IMR-90 (cell line): ENCODE measurements at regions of chr6 and their contacts with region 1.

Region 1: GRCh38 chr6:168088161-168089053 is 9.4 kb upstream of the FRMD1 start:
- DNase-seq: peak; percentile 74
- ATAC-seq: peak; percentile 99
- H3K4me3 ChIP-seq: no peak overlapping the region
- H3K27ac ChIP-seq: peak overlapping the region; percentile 48; the same call in 1 of the 2 replicates
- H3K4me1 ChIP-seq: peaks cover 15% of the 10 kb centered on the region; the same call in 1 of the 2 replicates
- H3K27me3 ChIP-seq: peaks cover 3% of the 10 kb centered on the region; the same call in 1 of the 2 replicates
- CTCF ChIP-seq: no peak
- POLR2A ChIP-seq: no peak
- RAD21 ChIP-seq: no peak

Region 2: GRCh38 chr6:168007592-168008338 is 80.6 kb before region 1 on chr6:
- CTCF ChIA-PET with region 1: no interaction called
- POLR2A ChIA-PET with region 1: no interaction called
- dilution Hi-C with region 1: no loop called
- in situ Hi-C with region 1: no loop called
- intact Hi-C with region 1: loop called (anchors 2 kb)
- DNase-seq: peak; percentile 99
- ATAC-seq: peak; percentile 97
- H3K4me3 ChIP-seq: no peak overlapping the region
- H3K27ac ChIP-seq: no peak overlapping the region
- H3K4me1 ChIP-seq: no peaks in the 10 kb centered on the region
- H3K27me3 ChIP-seq: peaks cover 5% of the 10 kb centered on the region
- CTCF ChIP-seq: no peak
- POLR2A ChIP-seq: no peak
- RAD21 ChIP-seq: 0 out of 2 replicates have a peak, but pooled peaks have one; percentile 10

Region 3: DNA sequence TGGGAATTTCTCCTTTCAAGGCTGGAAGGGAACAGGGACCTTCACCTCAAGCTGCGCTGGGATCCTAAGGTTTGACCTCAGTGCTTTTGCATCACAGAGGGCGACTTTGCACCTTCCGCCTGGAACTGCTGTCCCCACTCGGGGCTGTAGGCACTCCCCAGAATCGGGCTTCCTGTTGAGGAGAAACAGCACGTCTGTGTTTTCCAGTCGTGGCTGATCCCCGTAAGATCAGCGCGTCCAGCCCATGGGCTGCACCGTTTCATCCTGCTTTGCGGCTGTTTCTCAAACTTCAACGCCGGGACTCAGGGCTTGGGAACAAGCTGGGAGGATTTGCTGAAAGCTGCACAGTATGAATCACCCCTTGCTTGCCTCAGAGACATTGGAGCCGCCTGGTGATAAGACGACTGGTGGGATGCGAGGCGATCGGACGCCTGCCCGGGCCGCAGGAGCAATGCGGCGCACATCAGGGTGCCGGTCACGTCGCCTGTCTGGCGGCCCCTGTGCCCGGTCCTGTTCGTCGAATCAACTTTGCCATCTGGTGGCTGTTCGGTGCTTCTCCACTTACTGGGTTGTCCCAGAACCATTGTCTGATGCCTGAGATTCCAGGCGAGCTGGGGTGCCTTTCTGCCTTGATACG is 44.2 kb after region 1 on chr6:
- CTCF ChIA-PET with region 1: no interaction called
- POLR2A ChIA-PET with region 1: no interaction called
- dilution Hi-C with region 1: no loop called
- in situ Hi-C with region 1: no loop called
- intact Hi-C with region 1: loop called (anchors 2 kb)
- DNase-seq: peak; percentile 80
- ATAC-seq: peak; percentile 85
- H3K4me3 ChIP-seq: no peak overlapping the region
- H3K27ac ChIP-seq: no peak overlapping the region
- H3K4me1 ChIP-seq: peaks cover 2% of the 10 kb centered on the region; the same call in 1 of the 2 replicates
- H3K27me3 ChIP-seq: no peaks in the 10 kb centered on the region; the same call in 1 of the 2 replicates
- CTCF ChIP-seq: peak; percentile 41
- POLR2A ChIP-seq: no peak
- RAD21 ChIP-seq: peak; percentile 49